Aorta (tissue), 5 donors: ENCODE measurements at regions of chr11 and their contacts with region 1.

Region 1: DNA sequence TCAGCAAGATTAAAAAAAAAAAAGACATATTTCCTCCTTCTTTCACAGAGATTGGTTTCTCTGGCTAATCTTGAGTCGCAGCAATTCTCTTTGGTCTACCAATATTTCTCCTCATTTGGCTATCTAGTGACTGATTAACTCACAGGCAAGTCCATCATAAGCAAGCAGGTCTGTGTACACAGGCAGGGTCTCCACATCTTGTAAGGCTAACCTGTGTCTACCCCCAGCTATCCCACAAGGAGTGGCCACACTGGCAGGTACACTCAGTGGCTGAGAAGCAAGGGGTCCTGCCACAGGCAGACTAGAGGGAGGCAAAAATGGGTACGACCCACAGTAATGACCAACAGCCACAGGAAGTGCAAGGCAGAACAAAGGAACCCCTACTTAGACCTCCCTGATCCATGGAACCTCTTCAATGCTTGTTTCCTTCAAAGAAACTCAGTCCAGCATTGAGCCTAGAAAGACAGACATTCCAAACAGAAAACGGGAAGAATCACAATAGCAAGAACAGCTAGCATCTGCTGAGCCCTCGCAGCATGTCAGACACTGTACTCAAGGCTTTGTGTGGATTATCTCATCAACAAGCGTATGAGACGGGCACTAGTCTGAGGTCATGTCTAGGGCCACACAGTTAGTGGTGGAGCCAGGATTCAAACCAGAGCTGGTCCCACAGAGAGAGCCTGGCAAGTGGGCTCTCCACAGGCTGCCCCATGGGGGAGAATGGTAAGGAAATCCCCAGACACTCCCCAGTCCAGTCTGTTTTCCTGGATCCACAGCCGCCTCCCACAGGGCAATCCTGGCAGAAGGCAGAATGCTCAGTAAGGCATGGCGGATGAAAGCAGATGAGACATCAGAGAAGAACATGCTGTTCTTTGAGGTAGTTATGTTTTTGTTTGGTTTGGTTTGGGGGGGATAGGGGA is 34.3 kb downstream of the PLEKHA7 start:
- DNase-seq: no peak
- ATAC-seq: no peak
- H3K4me3 ChIP-seq: no peak overlapping the region
- H3K27ac ChIP-seq: no peak overlapping the region
- H3K4me1 ChIP-seq: no peaks in the 10 kb centered on the region
- H3K27me3 ChIP-seq: no peaks in the 10 kb centered on the region

Region 2: DNA sequence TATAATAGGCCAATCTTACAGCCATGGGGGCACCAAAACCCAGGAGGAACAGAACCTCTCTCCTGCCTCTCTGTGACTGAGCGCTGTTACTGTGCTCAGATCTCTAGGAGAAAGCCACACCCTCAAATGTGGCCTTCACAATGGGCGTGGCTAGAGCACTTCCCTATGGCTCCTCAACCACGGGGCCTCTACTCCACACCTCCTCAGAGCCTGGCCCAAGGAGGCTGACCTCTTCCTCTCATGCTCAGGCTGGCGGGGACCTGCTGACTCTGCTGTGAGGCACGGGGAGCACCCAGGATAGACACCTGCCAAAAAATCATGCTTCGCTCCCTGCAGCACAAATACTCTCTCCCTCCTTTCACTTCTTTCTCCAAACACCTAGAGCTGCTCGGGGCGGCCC is 200.5 kb before region 1 on chr11:
- intact Hi-C with region 1: no loop called
- DNase-seq: peak in 1 of 2 donors; percentile 64
- ATAC-seq: no peak
- H3K4me3 ChIP-seq: no peak overlapping the region
- H3K27ac ChIP-seq: no peak overlapping the region
- H3K4me1 ChIP-seq: no peaks in the 10 kb centered on the region
- H3K27me3 ChIP-seq: no peaks in the 10 kb centered on the region

Region 3: DNA sequence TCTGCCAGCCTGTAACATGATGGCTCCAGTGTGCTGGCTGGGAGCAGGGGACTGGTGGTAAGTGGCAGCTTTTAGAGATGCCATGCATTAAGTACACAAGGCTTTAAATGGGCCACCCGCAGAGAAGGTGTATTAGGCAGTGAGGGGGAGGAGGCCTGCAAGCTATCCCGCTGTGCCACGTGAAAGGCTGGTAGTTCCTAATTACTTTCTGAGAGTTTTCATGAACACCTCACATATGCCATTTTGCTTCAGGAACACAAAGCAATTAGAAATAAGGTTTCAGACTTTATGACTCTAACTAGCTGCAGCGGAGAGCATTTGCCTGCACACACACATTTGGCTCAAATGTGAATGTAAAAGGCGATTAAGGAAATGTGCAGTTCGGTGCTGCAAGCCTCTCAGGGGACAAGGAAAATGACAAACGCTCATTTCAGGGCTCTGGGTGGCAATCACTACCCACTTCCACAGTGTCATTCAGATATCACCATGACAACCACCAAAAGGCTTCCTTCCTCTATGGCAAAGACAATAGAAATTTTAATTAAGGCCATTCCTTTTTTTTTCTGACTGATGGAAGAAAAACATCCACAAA is 82.4 kb before region 1 on chr11:
- intact Hi-C with region 1: loop called in 1 of 2 experiments (anchors 2 kb)
- DNase-seq: no peak
- ATAC-seq: no peak
- H3K4me3 ChIP-seq: no peak overlapping the region
- H3K27ac ChIP-seq: no peak overlapping the region
- H3K4me1 ChIP-seq: no peaks in the 10 kb centered on the region
- H3K27me3 ChIP-seq: no peaks in the 10 kb centered on the region